ENCODE measurements at regions of chr7 and their contacts with region 1.

Region 1: DNA sequence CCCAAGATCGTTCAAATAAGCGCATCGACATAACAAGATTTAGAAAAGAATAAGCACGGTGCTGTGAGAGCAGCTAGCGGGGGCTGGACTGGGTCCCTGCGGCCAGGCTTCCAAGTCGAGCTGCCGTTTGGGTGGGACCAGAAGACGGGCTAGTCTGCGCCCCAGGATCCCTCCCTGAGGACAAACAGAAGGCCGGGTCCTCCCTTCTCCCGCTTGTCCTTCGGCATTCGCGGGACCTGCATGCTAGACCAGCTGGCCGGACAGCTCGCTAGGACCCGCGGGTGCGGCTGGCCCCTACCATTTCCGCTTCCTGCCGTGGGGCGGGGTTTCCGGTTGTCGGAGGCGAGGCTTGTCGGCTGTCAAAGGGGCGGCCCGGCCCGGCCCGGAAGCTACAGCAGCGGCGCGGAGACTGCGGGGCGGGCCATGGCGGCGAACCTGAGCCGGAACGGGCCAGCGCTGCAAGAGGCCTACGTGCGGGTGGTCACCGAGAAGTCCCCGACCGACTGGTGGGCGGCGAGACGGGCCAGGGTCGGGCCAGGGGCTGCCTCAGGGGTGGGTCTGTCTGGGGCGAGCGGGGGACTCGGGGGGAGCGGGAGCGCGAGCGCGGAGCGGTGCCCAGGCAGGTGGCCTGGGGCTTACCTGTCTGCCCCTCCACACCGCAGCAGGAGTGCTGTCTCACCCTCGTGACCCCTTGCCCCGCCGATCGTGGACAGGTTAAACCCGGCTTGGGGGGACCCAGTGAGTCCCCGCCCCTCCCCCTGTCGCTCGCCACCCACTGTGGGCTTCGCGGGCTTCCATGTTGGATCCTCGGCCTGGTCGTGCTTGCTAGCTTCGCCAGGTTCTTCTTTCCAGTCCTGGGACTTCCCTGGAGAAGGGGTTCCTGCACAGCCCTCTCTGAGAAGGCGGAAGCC is at the start of gene DBNL:
- DNase-seq: peak; percentile 95
- ATAC-seq: peak; percentile 65
- H3K4me3 Mint-ChIP-seq: peak within 1 kb of the TSS; percentile 84
- H3K27ac Mint-ChIP-seq: peak within 1 kb of the TSS; percentile 95
- H3K4me1 Mint-ChIP-seq: peaks cover 38% of the 10 kb centered on the region
- H3K27me3 Mint-ChIP-seq: no peaks in the 10 kb centered on the region
- total RNA-seq, gene DBNL: 152 to 157 TPM

Region 2: GRCh38 chr7:44065436-44066118 is 21.0 kb after region 1 on chr7 and contains the start of gene PGAM2:
- POLR2A ChIA-PET with region 1: interaction called, 22 read pairs
- DNase-seq: peak; percentile 36
- ATAC-seq: peak; percentile 44
- H3K4me3 Mint-ChIP-seq: no peak within 1 kb of the TSS
- H3K27ac Mint-ChIP-seq: no peak within 1 kb of the TSS
- H3K4me1 Mint-ChIP-seq: peaks cover 7% of the 10 kb centered on the region
- H3K27me3 Mint-ChIP-seq: no peaks in the 10 kb centered on the region
- total RNA-seq, gene PGAM2: 0.74 to 2.1 TPM

Region 3: GRCh38 chr7:44073664-44074348 is 29.2 kb after region 1 on chr7:
- POLR2A ChIA-PET with region 1: interaction called, 10 read pairs
- DNase-seq: peak; percentile 69
- ATAC-seq: peak; percentile 93
- H3K4me3 Mint-ChIP-seq: peak overlapping the region; percentile 68
- H3K27ac Mint-ChIP-seq: peak overlapping the region; percentile 79
- H3K4me1 Mint-ChIP-seq: peaks cover 31% of the 10 kb centered on the region
- H3K27me3 Mint-ChIP-seq: no peaks in the 10 kb centered on the region

Measured in activated naive CD8-positive, alpha-beta T cell treated with anti-CD3 and anti-CD28 coated beads, Interleukin-2, amount 10 ng/mL, durations not matched to agents 7 days and 5 days (primary cell).